Dorsolateral prefrontal cortex (tissue), 120 donors: ENCODE measurements at regions of chr11 and their contacts with region 1.

Region 1: DNA sequence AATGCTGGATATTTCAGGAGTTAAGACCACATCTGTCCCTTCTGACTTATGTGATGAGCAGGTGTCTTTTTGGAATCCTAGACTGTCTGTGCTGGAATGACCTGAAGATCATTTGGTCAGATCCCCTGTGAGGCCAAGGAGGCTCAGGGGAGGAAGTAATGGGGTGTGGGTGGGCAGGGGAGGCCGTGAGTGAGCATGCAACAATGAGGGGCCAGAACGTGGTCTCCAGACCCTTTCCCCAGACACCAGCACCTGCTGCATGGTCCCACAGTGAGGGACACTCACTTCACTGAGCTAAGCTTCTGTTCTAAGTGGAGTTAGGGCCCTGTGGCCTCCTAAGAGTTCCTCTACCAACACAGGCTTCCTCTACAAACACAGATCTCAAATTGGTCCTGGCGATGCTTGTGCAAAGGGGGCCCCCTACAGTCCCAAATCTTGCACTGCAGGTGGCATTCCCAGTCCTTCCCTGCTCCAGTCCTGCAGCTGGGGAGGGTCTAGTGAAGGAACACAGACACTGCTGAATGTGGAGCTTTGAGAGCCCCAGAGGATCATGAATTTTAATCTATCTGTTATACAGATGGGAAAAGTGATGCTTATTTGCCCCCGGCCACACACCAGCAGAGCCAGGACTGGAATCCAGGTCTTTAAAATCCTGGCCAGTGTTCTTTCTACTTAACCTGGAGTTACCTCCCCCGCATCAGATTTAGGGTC is 7.4 kb downstream of the USP2 start:
- DNase-seq: peak; percentile 72 to 95 (median 88)
- H3K4me3 ChIP-seq: peak overlapping the region in 19 of 59 donors; percentile 14 to 70 (median 58)
- H3K27ac ChIP-seq: peak overlapping the region; percentile 75 to 100 (median 99)
- H3K27me3 ChIP-seq: no peaks in the 10 kb centered on the region
- CTCF ChIP-seq: peak; percentile 78 to 97 (median 94)

Region 2: GRCh38 chr11:119196833-119197483 is 177.1 kb before region 1 on chr11:
- intact Hi-C with region 1: loop called in 1 of 2 experiments (anchors 5 kb)
- DNase-seq: peak in 4 of 10 donors; percentile 24 to 72 (median 49)
- H3K4me3 ChIP-seq: no peak overlapping the region
- H3K27ac ChIP-seq: no peak overlapping the region
- H3K27me3 ChIP-seq: no peaks in the 10 kb centered on the region
- CTCF ChIP-seq: peak; percentile 62 to 87 (median 76)

Region 3: GRCh38 chr11:119315131-119316015 is 58.7 kb before region 1 on chr11:
- intact Hi-C with region 1: loop called in 1 of 2 experiments (anchors 2 kb)
- DNase-seq: peak in 6 of 10 donors; percentile 65 to 82 (median 73)
- H3K4me3 ChIP-seq: peak overlapping the region; percentile 52 to 87 (median 72)
- H3K27ac ChIP-seq: peak overlapping the region; percentile 72 to 98 (median 94)
- H3K27me3 ChIP-seq: no peaks in the 10 kb centered on the region
- CTCF ChIP-seq: peak in 33 of 56 donors; percentile 9 to 48 (median 30)

Region 4: DNA sequence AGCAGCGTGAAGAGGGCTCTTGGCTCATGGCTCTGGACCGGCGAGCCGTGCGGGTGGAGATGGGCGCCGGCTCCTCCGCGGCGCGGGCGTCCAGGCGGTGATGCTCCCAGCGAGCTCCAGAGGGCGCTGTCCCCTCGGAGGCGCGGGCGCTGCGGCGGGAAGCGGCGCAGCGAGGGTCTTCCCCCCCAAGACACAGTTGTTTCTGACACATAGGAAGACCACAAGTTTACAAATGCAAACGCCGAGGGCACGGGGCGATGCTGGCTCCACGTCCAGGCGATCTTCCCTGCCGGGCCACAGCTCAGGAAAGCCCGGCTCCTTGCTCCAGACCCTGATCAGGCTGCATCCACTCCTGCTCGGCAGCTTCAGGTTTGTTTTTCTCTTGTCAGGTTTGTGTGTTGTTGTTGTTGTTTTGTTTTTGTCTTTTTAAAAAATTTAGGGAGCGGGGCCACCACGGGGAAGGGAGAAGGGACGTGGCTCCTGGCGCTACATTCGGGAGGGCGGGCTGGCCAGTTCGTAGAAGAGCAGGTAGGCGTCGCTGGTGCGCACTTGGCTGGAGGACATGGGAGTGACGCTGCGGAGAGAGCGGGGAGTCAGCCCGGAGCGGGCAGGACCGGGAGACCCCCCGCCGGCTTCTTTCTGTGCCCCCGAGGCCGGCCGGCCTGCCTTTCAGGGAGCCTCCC is 17.6 kb before region 1 on chr11:
- intact Hi-C with region 1: loop called (anchors 1 kb)
- DNase-seq: peak in 8 of 10 donors; percentile 67 to 83 (median 77)
- H3K4me3 ChIP-seq: peak overlapping the region in 57 of 59 donors; percentile 4 to 64 (median 39)
- H3K27ac ChIP-seq: peak overlapping the region in 58 of 59 donors; percentile 1 to 92 (median 74)
- H3K27me3 ChIP-seq: no peaks in the 10 kb centered on the region
- CTCF ChIP-seq: peak; percentile 51 to 99 (median 90)

Region 5: DNA sequence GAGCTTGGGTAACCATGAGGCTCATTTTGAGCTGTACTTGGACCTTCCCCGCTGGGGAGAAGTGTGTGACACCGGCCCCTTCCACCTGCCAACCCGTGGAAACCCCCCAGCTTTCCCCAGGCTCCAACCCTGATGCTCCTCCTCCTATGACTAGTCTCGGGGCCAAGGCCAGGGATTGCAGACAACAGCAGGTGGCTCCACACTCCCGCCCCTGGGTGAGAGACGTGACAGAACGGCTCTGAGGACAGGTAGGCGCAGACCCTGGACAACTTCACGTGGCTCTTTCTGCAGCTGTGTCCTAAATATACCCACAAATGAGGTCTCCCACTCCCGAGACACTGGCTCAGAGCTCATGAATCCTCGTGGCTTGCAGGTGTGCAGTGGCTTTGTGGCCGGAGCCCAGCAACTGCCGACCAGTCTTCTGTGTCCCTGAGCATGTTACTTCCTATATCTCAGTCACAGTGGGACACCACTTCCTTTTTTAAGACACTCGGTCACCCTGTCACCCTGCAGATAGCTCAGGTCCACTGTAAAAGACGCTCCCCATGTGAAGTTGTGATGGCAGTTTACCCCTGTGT is 299.8 kb after region 1 on chr11:
- intact Hi-C with region 1: loop called in 1 of 2 experiments (anchors 5 kb)
- DNase-seq: no peak
- H3K4me3 ChIP-seq: no peak overlapping the region
- H3K27ac ChIP-seq: peak overlapping the region in 46 of 59 donors; percentile 22 to 96 (median 89)
- H3K27me3 ChIP-seq: no peaks in the 10 kb centered on the region
- CTCF ChIP-seq: peak in 3 of 56 donors; percentile 16 to 21 (median 16)